ENCODE measurements at regions of chr1 and their contacts with region 1.

Region 1: GRCh38 chr1:16009030-16009709 is 5.1 kb downstream of the SRARP start:
- DNase-seq: peak; percentile 50
- H3K4me3 Mint-ChIP-seq: no peak overlapping the region
- H3K27ac Mint-ChIP-seq: no peak overlapping the region
- H3K4me1 Mint-ChIP-seq: peaks cover 15% of the 10 kb centered on the region
- H3K27me3 Mint-ChIP-seq: no peaks in the 10 kb centered on the region

Region 2: GRCh38 chr1:15799004-15799936 is 209.9 kb before region 1 on chr1:
- intact Hi-C with region 1: loop called (anchors 5 kb)
- DNase-seq: no peak
- H3K4me3 Mint-ChIP-seq: no peak overlapping the region
- H3K27ac Mint-ChIP-seq: no peak overlapping the region
- H3K4me1 Mint-ChIP-seq: peaks cover 9% of the 10 kb centered on the region
- H3K27me3 Mint-ChIP-seq: peaks cover 5% of the 10 kb centered on the region

Region 3: GRCh38 chr1:16032388-16033103 is 23.4 kb after region 1 on chr1:
- intact Hi-C with region 1: loop called (anchors 2 kb)
- DNase-seq: peak; percentile 35
- H3K4me3 Mint-ChIP-seq: no peak overlapping the region
- H3K27ac Mint-ChIP-seq: no peak overlapping the region
- H3K4me1 Mint-ChIP-seq: no peaks in the 10 kb centered on the region
- H3K27me3 Mint-ChIP-seq: peaks cover 7% of the 10 kb centered on the region